ENCODE measurements at regions of chr4 and their contacts with region 1.

Region 1: DNA sequence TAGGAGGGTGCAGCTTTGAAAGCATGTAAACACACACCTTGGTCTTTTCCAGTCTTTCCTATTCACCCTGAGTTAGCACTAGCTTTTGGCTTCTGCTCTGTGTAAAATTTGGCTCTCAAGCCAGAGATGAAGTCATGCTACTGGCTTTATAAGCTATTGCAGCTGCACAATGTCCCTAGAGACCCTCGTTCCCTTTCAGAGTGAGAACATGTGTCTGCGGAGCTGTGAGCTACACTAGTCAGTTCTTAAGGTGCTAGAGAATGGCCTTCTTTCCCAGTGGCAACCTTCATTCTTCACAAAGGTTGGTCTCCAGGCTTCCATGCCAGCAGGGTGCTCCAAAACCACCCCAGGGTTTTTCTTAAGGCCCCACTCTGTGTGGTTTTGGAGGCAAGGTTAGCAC is 199.1 kb downstream of the SPATA18 start:
- DNase-seq: no peak
- ATAC-seq: no peak
- H3K4me3 ChIP-seq: no peak overlapping the region
- H3K27ac ChIP-seq: no peak overlapping the region
- H3K4me1 ChIP-seq: no peaks in the 10 kb centered on the region
- H3K27me3 ChIP-seq: no peaks in the 10 kb centered on the region
- CTCF ChIP-seq: no peak
- POLR2A ChIP-seq: no peak
- RAD21 ChIP-seq: no peak

Region 2: GRCh38 chr4:52312714-52313113 is 62.6 kb after region 1 on chr4:
- CTCF ChIA-PET with region 1: no interaction called
- POLR2A ChIA-PET with region 1: no interaction called
- dilution Hi-C with region 1: no loop called
- in situ Hi-C with region 1: no loop called
- intact Hi-C with region 1: loop called (anchors 10 kb)
- DNase-seq: no peak
- ATAC-seq: no peak
- H3K4me3 ChIP-seq: no peak overlapping the region
- H3K27ac ChIP-seq: no peak overlapping the region
- H3K4me1 ChIP-seq: no peaks in the 10 kb centered on the region
- H3K27me3 ChIP-seq: no peaks in the 10 kb centered on the region
- CTCF ChIP-seq: no peak
- POLR2A ChIP-seq: no peak
- RAD21 ChIP-seq: no peak

Measured in IMR-90 (cell line).